Ovary (tissue), 10 donors: ENCODE measurements at regions of chr10 and their contacts with region 1.

Region 1: DNA sequence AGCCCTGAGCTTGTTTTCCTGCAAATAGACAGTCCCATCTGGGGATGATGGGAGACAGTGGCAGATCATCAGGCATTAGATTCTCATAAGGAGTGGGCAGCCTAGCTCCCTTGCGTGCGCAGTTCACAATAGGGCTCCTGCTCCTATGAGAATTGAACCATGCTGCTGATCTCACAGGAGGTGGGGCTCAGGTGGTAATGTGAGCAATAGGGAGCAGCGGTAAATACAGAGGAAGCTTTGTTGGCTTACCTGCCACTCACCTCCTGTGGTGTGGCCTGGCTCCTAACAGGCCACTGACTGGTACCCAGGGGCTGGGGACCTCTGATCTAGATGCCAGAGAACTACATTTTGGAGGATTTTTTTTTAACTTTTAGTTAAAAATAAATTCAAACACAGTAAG is 434.8 kb upstream of the MKI67 start:
- DNase-seq: no peak
- H3K4me3 ChIP-seq: no peak overlapping the region
- H3K27ac ChIP-seq: no peak overlapping the region
- H3K4me1 ChIP-seq: no peaks in the 10 kb centered on the region
- H3K27me3 ChIP-seq: no peaks in the 10 kb centered on the region
- CTCF ChIP-seq: no peak
- EP300 ChIP-seq: no peak
- POLR2A ChIP-seq: no peak

Region 2: DNA sequence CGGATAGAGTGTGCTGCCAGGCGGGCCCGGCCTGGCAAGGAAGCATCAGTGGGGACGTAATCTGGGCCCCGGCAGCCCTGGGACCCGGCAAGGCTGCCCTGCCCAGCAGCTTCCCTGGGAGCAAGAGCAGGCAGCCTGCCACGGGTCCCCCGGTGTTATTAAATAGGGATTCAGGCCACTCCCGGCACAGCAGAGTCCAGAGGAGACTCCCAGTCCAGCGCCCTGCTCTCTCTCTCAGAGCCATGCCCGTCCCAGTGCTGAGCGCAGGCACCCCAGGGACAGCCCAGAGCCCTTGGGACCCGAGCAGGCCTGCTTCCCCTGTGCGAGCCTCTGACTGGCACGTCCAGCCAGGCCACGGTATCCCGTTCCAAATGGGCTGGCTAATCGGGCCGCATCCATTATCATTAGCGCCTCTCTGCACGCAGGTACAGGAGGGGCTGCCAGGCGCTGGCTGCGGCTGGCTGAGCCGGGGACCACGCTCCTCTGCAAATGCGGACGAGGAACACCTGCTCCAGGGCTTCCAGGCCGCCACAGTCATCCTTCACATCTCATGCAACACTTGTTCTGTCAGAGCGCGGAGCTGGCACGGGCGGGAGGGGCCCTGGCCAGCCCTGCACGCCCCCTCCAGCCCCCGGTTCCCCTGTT is 90.5 kb before region 1 on chr10:
- intact Hi-C with region 1: no loop called
- DNase-seq: no peak
- H3K4me3 ChIP-seq: no peak overlapping the region
- H3K27ac ChIP-seq: no peak overlapping the region
- H3K4me1 ChIP-seq: no peaks in the 10 kb centered on the region
- H3K27me3 ChIP-seq: no peaks in the 10 kb centered on the region
- CTCF ChIP-seq: no peak
- EP300 ChIP-seq: no peak
- POLR2A ChIP-seq: no peak

Region 3: DNA sequence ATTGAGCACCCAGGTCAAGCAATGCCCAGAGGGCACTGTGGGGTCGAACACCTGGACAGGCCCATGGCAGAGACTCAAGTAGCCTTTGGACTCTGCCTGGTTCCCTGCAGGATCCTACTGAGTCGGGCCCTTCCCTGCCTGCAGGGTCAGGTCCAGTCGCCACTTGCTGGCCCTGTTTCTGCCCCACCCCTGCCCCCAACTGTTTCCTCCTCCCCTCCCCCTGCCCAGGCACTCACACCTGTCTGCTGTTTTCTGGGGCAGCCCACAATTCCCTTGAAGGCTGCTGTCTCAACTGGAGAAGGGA is 48.5 kb after region 1 on chr10:
- intact Hi-C with region 1: loop called in 1 of 4 experiments (anchors 1 kb)
- DNase-seq: no peak
- H3K4me3 ChIP-seq: no peak overlapping the region
- H3K27ac ChIP-seq: no peak overlapping the region
- H3K4me1 ChIP-seq: no peaks in the 10 kb centered on the region
- H3K27me3 ChIP-seq: no peaks in the 10 kb centered on the region
- CTCF ChIP-seq: no peak
- EP300 ChIP-seq: no peak
- POLR2A ChIP-seq: no peak